MCF 10A (cell line): ENCODE measurements at regions of chr13 and their contacts with region 1.

Region 1: GRCh38 chr13:62512194-62513141 is 1096.8 kb upstream of the PCDH20 start:
- DNase-seq: peak; percentile 44
- H3K4me3 Mint-ChIP-seq: no peak overlapping the region
- H3K27ac Mint-ChIP-seq: no peak overlapping the region
- H3K4me1 Mint-ChIP-seq: no peaks in the 10 kb centered on the region
- H3K27me3 Mint-ChIP-seq: peaks cover 59% of the 10 kb centered on the region
- CTCF ChIP-seq: peak; percentile 54

Region 2: GRCh38 chr13:62551588-62551987 is 39.1 kb after region 1 on chr13:
- CTCF ChIA-PET with region 1: no interaction called
- POLR2A ChIA-PET with region 1: no interaction called
- intact Hi-C with region 1: no loop called
- DNase-seq: no peak
- H3K4me3 Mint-ChIP-seq: no peak overlapping the region
- H3K27ac Mint-ChIP-seq: no peak overlapping the region
- H3K4me1 Mint-ChIP-seq: no peaks in the 10 kb centered on the region
- H3K27me3 Mint-ChIP-seq: no peaks in the 10 kb centered on the region
- CTCF ChIP-seq: no peak

Region 3: GRCh38 chr13:63124863-63125262 is 612.4 kb after region 1 on chr13:
- CTCF ChIA-PET with region 1: no interaction called
- POLR2A ChIA-PET with region 1: no interaction called
- intact Hi-C with region 1: loop called (anchors 10 kb)
- DNase-seq: peak; percentile 36
- H3K4me3 Mint-ChIP-seq: no peak overlapping the region
- H3K27ac Mint-ChIP-seq: no peak overlapping the region
- H3K4me1 Mint-ChIP-seq: no peaks in the 10 kb centered on the region
- H3K27me3 Mint-ChIP-seq: no peaks in the 10 kb centered on the region
- CTCF ChIP-seq: peak; percentile 37